GM12878 (cell line): ENCODE measurements at regions of chrX and their contacts with region 1.

Region 1: GRCh38 chrX:19725641-19726040 is 161.8 kb downstream of the SH3KBP1 start:
- DNase-seq: no peak
- ATAC-seq: peak; percentile 18
- H3K4me3 ChIP-seq: no peak overlapping the region
- H3K27ac ChIP-seq: no peak overlapping the region
- H3K4me1 ChIP-seq: peaks cover 2% of the 10 kb centered on the region
- H3K27me3 ChIP-seq: no peaks in the 10 kb centered on the region
- CTCF ChIP-seq: no peak
- EP300 ChIP-seq: no peak
- POLR2A ChIP-seq: no peak; the same call in 1 of the 2 replicates
- RAD21 ChIP-seq: no peak

Region 2: GRCh38 chrX:18789916-18790315 is 935.7 kb before region 1 on chrX:
- CTCF ChIA-PET with region 1: no interaction called
- POLR2A ChIA-PET with region 1: no interaction called
- RAD21 ChIA-PET with region 1: no interaction called
- SMC1A ChIA-PET with region 1: no interaction called
- in situ Hi-C with region 1: no loop called
- intact Hi-C with region 1: no loop called
- DNase-seq: no peak
- ATAC-seq: no peak
- H3K4me3 ChIP-seq: no peak overlapping the region
- H3K27ac ChIP-seq: no peak overlapping the region
- H3K4me1 ChIP-seq: no peaks in the 10 kb centered on the region
- H3K27me3 ChIP-seq: no peaks in the 10 kb centered on the region
- CTCF ChIP-seq: no peak
- EP300 ChIP-seq: no peak
- POLR2A ChIP-seq: no peak
- RAD21 ChIP-seq: no peak

Region 3: GRCh38 chrX:19535476-19535875 is 190.2 kb before region 1 on chrX:
- CTCF ChIA-PET with region 1: no interaction called
- POLR2A ChIA-PET with region 1: no interaction called
- RAD21 ChIA-PET with region 1: no interaction called
- SMC1A ChIA-PET with region 1: no interaction called
- in situ Hi-C with region 1: no loop called
- intact Hi-C with region 1: no loop called
- DNase-seq: no peak
- ATAC-seq: peak; percentile 57
- H3K4me3 ChIP-seq: no peak overlapping the region
- H3K27ac ChIP-seq: no peak overlapping the region
- H3K4me1 ChIP-seq: no peaks in the 10 kb centered on the region
- H3K27me3 ChIP-seq: no peaks in the 10 kb centered on the region
- CTCF ChIP-seq: peak in 2 of 3 experiments; percentile 12 to 13; a peak in 1 of 6 replicates
- EP300 ChIP-seq: no peak
- POLR2A ChIP-seq: no peak
- RAD21 ChIP-seq: peak; percentile 30

Region 4: GRCh38 chrX:19593690-19594089 is 132.0 kb before region 1 on chrX:
- CTCF ChIA-PET with region 1: no interaction called
- POLR2A ChIA-PET with region 1: no interaction called
- RAD21 ChIA-PET with region 1: no interaction called
- SMC1A ChIA-PET with region 1: interaction called, 5 read pairs
- in situ Hi-C with region 1: no loop called
- intact Hi-C with region 1: loop called (anchors 5 kb)
- DNase-seq: no peak
- ATAC-seq: peak; percentile 71
- H3K4me3 ChIP-seq: no peak overlapping the region
- H3K27ac ChIP-seq: no peak overlapping the region
- H3K4me1 ChIP-seq: no peaks in the 10 kb centered on the region
- H3K27me3 ChIP-seq: no peaks in the 10 kb centered on the region
- CTCF ChIP-seq: peak in 2 of 3 experiments; percentile 16 to 40; a peak in 4 of 6 replicates
- EP300 ChIP-seq: no peak
- POLR2A ChIP-seq: no peak
- RAD21 ChIP-seq: peak; percentile 62

Region 5: GRCh38 chrX:19698691-19699090 is 26.9 kb before region 1 on chrX:
- CTCF ChIA-PET with region 1: no interaction called
- POLR2A ChIA-PET with region 1: no interaction called
- RAD21 ChIA-PET with region 1: interaction called, 3 read pairs
- SMC1A ChIA-PET with region 1: interaction called, 12 read pairs
- in situ Hi-C with region 1: no loop called
- intact Hi-C with region 1: no loop called
- DNase-seq: no peak
- ATAC-seq: no peak
- H3K4me3 ChIP-seq: no peak overlapping the region
- H3K27ac ChIP-seq: no peak overlapping the region
- H3K4me1 ChIP-seq: no peaks in the 10 kb centered on the region
- H3K27me3 ChIP-seq: no peaks in the 10 kb centered on the region
- CTCF ChIP-seq: no peak
- EP300 ChIP-seq: no peak
- POLR2A ChIP-seq: no peak
- RAD21 ChIP-seq: no peak

Region 6: GRCh38 chrX:19920970-19921369 is 195.3 kb after region 1 on chrX:
- CTCF ChIA-PET with region 1: no interaction called
- POLR2A ChIA-PET with region 1: no interaction called
- RAD21 ChIA-PET with region 1: no interaction called
- SMC1A ChIA-PET with region 1: no interaction called
- in situ Hi-C with region 1: no loop called
- intact Hi-C with region 1: no loop called
- DNase-seq: no peak
- ATAC-seq: no peak
- H3K4me3 ChIP-seq: no peak overlapping the region
- H3K27ac ChIP-seq: no peak overlapping the region
- H3K4me1 ChIP-seq: no peaks in the 10 kb centered on the region
- H3K27me3 ChIP-seq: no peaks in the 10 kb centered on the region
- CTCF ChIP-seq: no peak
- EP300 ChIP-seq: no peak
- POLR2A ChIP-seq: no peak
- RAD21 ChIP-seq: no peak